WTC11 (cell line): ENCODE measurements at regions of chr14 and their contacts with region 1.

Region 1: DNA sequence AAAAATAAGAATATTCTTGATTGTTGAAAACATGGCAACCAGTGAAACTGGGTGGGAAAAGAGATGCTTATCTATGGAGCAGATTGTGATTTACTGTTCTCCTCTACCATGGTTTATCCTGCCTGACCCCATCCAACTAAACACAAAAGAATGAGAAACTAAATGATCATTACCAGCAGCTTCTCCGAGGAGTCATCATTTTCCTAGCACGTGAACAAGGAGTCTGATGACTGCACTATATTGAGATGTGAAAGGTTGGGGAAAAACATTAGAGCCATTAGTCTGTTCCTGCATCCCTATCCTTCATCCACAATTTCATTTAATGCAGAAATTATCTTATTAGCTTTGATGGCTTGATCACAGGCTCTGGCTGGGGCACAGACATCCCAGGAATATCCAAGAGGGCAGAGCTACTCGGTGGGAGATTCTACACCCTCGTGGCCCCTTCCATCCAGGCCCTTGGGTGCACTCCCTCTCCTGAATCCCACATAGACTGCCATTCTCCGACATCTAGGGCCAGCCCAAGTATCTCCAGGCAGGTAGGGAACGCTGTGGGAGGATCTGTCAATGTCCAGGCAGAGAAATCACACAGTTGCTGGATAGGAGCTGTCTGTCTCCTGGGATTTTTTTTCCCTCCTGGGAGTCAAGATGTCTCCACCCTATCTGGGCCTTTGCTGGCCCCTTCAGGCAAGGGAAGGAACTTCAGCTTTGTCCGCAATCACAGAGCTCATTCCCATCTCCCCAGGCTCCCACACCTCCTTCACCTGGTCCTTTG is 43.3 kb upstream of the DHRS4 start:
- DNase-seq: peak; percentile 90
- ATAC-seq: peak; percentile 100
- H3K4me3 Mint-ChIP-seq: no peak overlapping the region
- H3K27ac Mint-ChIP-seq: no peak overlapping the region
- H3K4me1 Mint-ChIP-seq: peaks cover 10% of the 10 kb centered on the region
- H3K27me3 Mint-ChIP-seq: peaks cover 12% of the 10 kb centered on the region
- CTCF ChIP-seq: peak; percentile 71

Region 2: DNA sequence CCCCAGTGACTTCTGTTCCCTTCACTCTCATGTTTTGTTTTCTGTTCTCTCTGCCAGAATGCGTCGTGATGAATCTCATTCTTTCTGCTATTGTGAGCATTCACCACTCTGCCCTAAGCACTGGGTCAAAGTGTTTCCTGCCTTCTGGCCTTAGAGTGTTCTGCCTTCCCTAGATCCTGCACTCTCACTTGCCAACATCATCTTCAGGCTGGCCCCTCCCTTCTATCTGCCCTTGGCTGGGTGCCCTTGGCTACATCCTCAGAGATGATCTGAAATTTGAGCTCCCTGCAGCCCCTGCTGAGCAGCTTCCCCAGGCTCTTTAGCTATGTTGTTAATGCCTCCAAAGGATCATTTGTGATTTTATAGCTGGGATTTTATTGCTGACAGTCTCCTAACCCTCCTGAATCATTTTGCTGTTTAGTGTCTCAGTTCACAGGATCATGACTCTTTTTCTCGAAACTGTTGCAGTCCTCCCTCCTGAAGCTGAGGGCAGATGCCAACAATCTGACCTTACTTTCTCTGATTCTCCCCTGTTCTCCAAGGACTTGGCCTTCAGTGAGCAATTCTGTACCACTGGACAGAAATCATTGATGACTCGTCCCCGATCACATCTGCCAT is 269.7 kb before region 1 on chr14:
- CTCF ChIA-PET with region 1: interaction called, 16 read pairs
- POLR2A ChIA-PET with region 1: no interaction called
- DNase-seq: peak; percentile 29
- ATAC-seq: peak; percentile 87
- H3K4me3 Mint-ChIP-seq: no peak overlapping the region
- H3K27ac Mint-ChIP-seq: no peak overlapping the region
- H3K4me1 Mint-ChIP-seq: 0 out of 2 replicates have a peak, but pooled peaks cover 2% of the 10 kb centered on the region
- H3K27me3 Mint-ChIP-seq: no peaks in the 10 kb centered on the region; the same call in 1 of the 2 replicates
- CTCF ChIP-seq: no peak

Region 3: GRCh38 chr14:23694085-23694975 is 216.0 kb before region 1 on chr14:
- CTCF ChIA-PET with region 1: interaction called, 16 read pairs
- POLR2A ChIA-PET with region 1: interaction called, 3 read pairs
- DNase-seq: peak; percentile 37
- ATAC-seq: peak; percentile 68
- H3K4me3 Mint-ChIP-seq: no peak overlapping the region
- H3K27ac Mint-ChIP-seq: no peak overlapping the region
- H3K4me1 Mint-ChIP-seq: 0 out of 2 replicates have a peak, but pooled peaks cover 3% of the 10 kb centered on the region
- H3K27me3 Mint-ChIP-seq: peaks cover 6% of the 10 kb centered on the region
- CTCF ChIP-seq: no peak

Region 4: GRCh38 chr14:23776288-23776687 is 134.0 kb before region 1 on chr14:
- CTCF ChIA-PET with region 1: interaction called, 12 read pairs
- POLR2A ChIA-PET with region 1: no interaction called
- DNase-seq: no peak
- ATAC-seq: no peak
- H3K4me3 Mint-ChIP-seq: no peak overlapping the region
- H3K27ac Mint-ChIP-seq: no peak overlapping the region
- H3K4me1 Mint-ChIP-seq: peaks cover 3% of the 10 kb centered on the region; the same call in 1 of the 2 replicates
- H3K27me3 Mint-ChIP-seq: no peaks in the 10 kb centered on the region; the same call in 1 of the 2 replicates
- CTCF ChIP-seq: no peak

Region 5: DNA sequence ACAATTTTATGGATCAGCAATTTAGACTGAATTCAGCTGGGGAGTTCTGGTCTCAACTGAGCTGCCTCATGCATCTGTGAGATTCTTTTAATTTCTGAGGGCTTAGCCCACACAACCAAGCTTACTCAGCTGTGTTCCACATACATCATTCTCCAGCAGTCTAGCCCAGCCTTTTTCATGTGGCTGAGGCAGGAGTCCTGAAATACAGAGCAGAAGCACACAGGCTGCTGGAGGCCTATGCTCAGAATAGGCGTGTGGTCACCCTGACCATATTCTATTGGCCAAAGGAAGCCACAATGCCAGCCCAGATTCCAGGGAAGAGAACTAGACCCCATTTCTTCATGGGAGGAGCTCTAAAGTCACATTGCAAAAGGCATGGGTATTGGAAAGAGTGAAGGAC is 29.0 kb before region 1 on chr14:
- CTCF ChIA-PET with region 1: interaction called, 21 read pairs
- POLR2A ChIA-PET with region 1: no interaction called
- DNase-seq: no peak
- ATAC-seq: no peak
- H3K4me3 Mint-ChIP-seq: no peak overlapping the region
- H3K27ac Mint-ChIP-seq: no peak overlapping the region
- H3K4me1 Mint-ChIP-seq: peaks cover 21% of the 10 kb centered on the region
- H3K27me3 Mint-ChIP-seq: peaks cover under 1% of the 10 kb centered on the region; the same call in 1 of the 2 replicates
- CTCF ChIP-seq: no peak

Region 6: GRCh38 chr14:23922545-23922944 is 12.3 kb after region 1 on chr14:
- CTCF ChIA-PET with region 1: interaction called, 10 read pairs
- POLR2A ChIA-PET with region 1: no interaction called
- DNase-seq: no peak
- ATAC-seq: no peak
- H3K4me3 Mint-ChIP-seq: no peak overlapping the region
- H3K27ac Mint-ChIP-seq: no peak overlapping the region
- H3K4me1 Mint-ChIP-seq: no peaks in the 10 kb centered on the region
- H3K27me3 Mint-ChIP-seq: peaks cover 2% of the 10 kb centered on the region; the same call in 1 of the 2 replicates
- CTCF ChIP-seq: no peak

Region 7: DNA sequence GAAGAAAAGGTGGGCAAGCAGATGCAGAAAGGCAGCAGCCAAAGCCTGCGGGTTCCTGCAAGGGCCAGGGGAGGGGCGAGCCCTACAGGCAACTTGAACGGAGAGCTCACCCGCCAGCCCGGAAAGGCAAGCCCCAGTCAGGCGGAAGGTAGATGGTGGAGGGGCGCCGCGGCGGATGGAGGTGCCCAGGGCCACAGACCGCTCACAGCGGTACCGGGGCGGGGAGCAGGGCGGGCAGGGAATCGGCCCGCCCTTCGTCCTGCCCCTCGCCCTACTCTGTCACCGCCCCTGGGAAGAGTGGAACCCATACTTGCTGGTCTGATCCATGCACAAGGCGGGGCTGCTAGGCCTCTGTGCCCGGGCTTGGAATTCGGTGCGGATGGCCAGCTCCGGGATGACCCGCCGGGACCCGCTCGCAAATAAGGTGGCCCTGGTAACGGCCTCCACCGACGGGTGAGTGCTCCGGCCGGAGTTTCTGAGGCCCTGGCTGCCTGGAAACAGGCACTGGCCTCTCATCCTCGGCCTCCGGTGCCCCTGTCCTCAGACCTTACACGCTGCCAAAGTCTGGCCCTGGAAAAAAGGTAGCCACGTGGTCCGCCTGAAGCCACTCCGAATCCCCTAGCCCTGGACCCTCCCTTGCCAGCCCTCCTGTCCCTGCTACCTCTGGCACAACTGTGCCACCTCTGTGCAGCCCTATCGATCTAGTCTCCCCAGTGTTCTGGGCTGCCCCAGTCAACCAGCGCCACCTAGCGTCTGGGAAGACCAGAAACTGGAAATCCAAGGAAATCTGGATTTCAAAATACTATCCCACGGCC is 43.4 kb after region 1 on chr14 and contains the start of gene DHRS4:
- CTCF ChIA-PET with region 1: interaction called, 17 read pairs
- POLR2A ChIA-PET with region 1: no interaction called
- DNase-seq: peak; percentile 82
- ATAC-seq: peak; percentile 95
- H3K4me3 Mint-ChIP-seq: peak within 1 kb of the TSS; percentile 87
- H3K27ac Mint-ChIP-seq: peak within 1 kb of the TSS; percentile 84
- H3K4me1 Mint-ChIP-seq: peaks cover 26% of the 10 kb centered on the region
- H3K27me3 Mint-ChIP-seq: peaks cover 2% of the 10 kb centered on the region; the same call in 1 of the 2 replicates
- CTCF ChIP-seq: peak; percentile 84
- total RNA-seq, gene DHRS4: 14.5 to 14.9 TPM (median 14.8 TPM) in 3 replicates

Region 8: GRCh38 chr14:24071144-24071697 is 160.9 kb after region 1 on chr14 and contains the start of gene CPNE6:
- CTCF ChIA-PET with region 1: no interaction called
- POLR2A ChIA-PET with region 1: no interaction called
- DNase-seq: no peak
- ATAC-seq: no peak
- H3K4me3 Mint-ChIP-seq: no peak within 1 kb of the TSS
- H3K27ac Mint-ChIP-seq: no peak within 1 kb of the TSS
- H3K4me1 Mint-ChIP-seq: 0 out of 2 replicates have a peak, but pooled peaks cover 4% of the 10 kb centered on the region
- H3K27me3 Mint-ChIP-seq: no peaks in the 10 kb centered on the region; the same call in 1 of the 2 replicates
- CTCF ChIP-seq: no peak
- total RNA-seq, gene CPNE6: not detected in 3 replicates